H1 (cell line): ENCODE measurements at regions of chr6 and their contacts with region 1.

Region 1: GRCh38 chr6:159174263-159174969 is 5.2 kb downstream of the FNDC1 start:
- DNase-seq: peak in 1 of 2 experiments; percentile 92
- H3K4me3 ChIP-seq: peak overlapping the region in 1 of 4 experiments; percentile 42; a peak in 1 of 8 replicates
- H3K27ac ChIP-seq: no peak overlapping the region
- H3K4me1 ChIP-seq: peaks cover 0 to 8% (median 4%) of the 10 kb centered on the region in 4 experiments; a peak in 3 of 7 replicates
- H3K27me3 ChIP-seq: peaks cover 19 to 42% (median 27%) of the 10 kb centered on the region in 4 experiments
- CTCF ChIP-seq: peak; percentile 87 to 95 (median 92)
- EP300 ChIP-seq: no peak
- POLR2A ChIP-seq: no peak
- RAD21 ChIP-seq: peak; percentile 92 to 94

Region 2: GRCh38 chr6:159163901-159164370 is 10.5 kb before region 1 on chr6:
- CTCF ChIA-PET with region 1: no interaction called
- POLR2A ChIA-PET with region 1: no interaction called
- DNase-seq: no peak
- H3K4me3 ChIP-seq: no peak overlapping the region
- H3K27ac ChIP-seq: no peak overlapping the region
- H3K4me1 ChIP-seq: peaks cover 0 to 3% (median 0%) of the 10 kb centered on the region in 4 experiments; a peak in 2 of 7 replicates
- H3K27me3 ChIP-seq: peaks cover 12 to 32% (median 25%) of the 10 kb centered on the region in 4 experiments
- CTCF ChIP-seq: no peak
- EP300 ChIP-seq: no peak
- POLR2A ChIP-seq: no peak
- RAD21 ChIP-seq: no peak

Region 3: GRCh38 chr6:159184559-159184958 is 10.1 kb after region 1 on chr6:
- CTCF ChIA-PET with region 1: interaction called, 12 read pairs
- POLR2A ChIA-PET with region 1: no interaction called
- DNase-seq: no peak
- H3K4me3 ChIP-seq: no peak overlapping the region
- H3K27ac ChIP-seq: no peak overlapping the region
- H3K4me1 ChIP-seq: no peaks in the 10 kb centered on the region
- H3K27me3 ChIP-seq: no peaks in the 10 kb centered on the region
- CTCF ChIP-seq: no peak
- EP300 ChIP-seq: no peak
- POLR2A ChIP-seq: no peak
- RAD21 ChIP-seq: no peak

Region 4: GRCh38 chr6:159196430-159196975 is 22.1 kb after region 1 on chr6:
- CTCF ChIA-PET with region 1: no interaction called
- POLR2A ChIA-PET with region 1: no interaction called
- DNase-seq: no peak
- H3K4me3 ChIP-seq: no peak overlapping the region
- H3K27ac ChIP-seq: no peak overlapping the region
- H3K4me1 ChIP-seq: no peaks in the 10 kb centered on the region
- H3K27me3 ChIP-seq: no peaks in the 10 kb centered on the region; a peak in 1 of 7 replicates
- CTCF ChIP-seq: no peak
- EP300 ChIP-seq: no peak
- POLR2A ChIP-seq: no peak
- RAD21 ChIP-seq: no peak

Region 5: DNA sequence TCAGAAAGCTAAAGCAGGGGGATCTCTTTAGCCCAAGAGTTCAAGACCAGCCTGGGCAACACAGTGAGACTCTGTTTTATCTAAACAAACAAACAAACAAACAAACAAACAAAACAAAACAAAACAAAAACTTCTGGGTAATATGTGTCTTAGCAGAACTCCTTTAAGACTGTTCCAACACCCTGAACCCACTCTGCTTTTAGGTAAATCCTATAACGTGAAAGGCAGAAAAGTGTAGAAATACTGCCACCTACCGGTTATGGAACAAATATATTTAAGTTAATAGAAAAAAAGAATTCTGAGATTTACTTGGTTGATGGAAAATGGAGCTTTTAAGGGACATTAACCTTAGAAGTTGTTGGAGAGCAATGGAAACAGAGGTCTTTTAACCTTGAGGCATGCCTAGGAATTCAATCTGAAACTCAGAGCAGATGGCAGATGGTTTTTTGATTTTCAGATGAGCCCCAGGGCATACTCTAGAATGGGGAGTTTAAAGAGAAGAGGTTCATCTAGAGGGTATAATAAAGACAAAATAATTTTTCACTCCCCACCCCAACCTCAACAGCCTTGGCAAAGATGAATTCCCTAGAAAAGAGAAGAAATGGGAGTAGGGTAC is 480.2 kb after region 1 on chr6:
- CTCF ChIA-PET with region 1: interaction called, 49 read pairs
- POLR2A ChIA-PET with region 1: no interaction called
- DNase-seq: no peak
- H3K4me3 ChIP-seq: no peak overlapping the region
- H3K27ac ChIP-seq: no peak overlapping the region
- H3K4me1 ChIP-seq: peaks cover 0 to 3% (median under 1%) of the 10 kb centered on the region in 4 experiments; a peak in 2 of 7 replicates
- H3K27me3 ChIP-seq: no peaks in the 10 kb centered on the region
- CTCF ChIP-seq: peak in 2 of 3 experiments; percentile 37 to 40; a peak in 2 of 4 replicates
- EP300 ChIP-seq: no peak
- POLR2A ChIP-seq: no peak
- RAD21 ChIP-seq: peak; percentile 63 to 70